ENCODE measurements at regions of chr12 and their contacts with region 1.

Region 1: DNA sequence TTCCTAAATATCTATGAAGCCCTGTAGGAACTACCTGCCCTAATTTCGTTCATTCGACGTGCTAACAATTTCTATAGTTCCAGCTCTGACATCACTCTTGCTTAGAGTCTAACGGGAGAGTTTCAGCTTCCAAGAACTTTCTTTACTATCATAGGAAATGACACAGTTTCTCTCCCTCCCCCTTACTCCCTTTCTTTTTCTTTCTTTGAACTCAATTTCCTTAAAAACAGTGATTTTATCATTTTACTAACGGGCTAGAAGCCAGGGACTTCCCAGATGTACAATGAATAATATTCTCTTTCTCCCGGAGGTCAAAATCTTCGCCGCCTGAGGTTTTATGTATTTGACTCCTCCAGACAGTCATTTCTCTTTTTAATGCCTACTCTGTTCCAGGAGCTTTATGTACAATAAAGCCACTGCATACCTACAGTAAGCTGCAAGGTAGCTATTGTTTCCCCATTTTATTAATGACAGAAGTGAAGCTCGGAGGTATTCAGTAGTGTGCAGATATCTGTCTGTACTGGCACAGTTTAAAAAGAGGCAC is 15.7 kb downstream of the SMCO2 start:
- DNase-seq: peak; percentile 59
- H3K4me3 Mint-ChIP-seq: no peak overlapping the region
- H3K27ac Mint-ChIP-seq: peak overlapping the region; percentile 72
- H3K4me1 Mint-ChIP-seq: peaks cover 58% of the 10 kb centered on the region
- H3K27me3 Mint-ChIP-seq: no peaks in the 10 kb centered on the region

Region 2: DNA sequence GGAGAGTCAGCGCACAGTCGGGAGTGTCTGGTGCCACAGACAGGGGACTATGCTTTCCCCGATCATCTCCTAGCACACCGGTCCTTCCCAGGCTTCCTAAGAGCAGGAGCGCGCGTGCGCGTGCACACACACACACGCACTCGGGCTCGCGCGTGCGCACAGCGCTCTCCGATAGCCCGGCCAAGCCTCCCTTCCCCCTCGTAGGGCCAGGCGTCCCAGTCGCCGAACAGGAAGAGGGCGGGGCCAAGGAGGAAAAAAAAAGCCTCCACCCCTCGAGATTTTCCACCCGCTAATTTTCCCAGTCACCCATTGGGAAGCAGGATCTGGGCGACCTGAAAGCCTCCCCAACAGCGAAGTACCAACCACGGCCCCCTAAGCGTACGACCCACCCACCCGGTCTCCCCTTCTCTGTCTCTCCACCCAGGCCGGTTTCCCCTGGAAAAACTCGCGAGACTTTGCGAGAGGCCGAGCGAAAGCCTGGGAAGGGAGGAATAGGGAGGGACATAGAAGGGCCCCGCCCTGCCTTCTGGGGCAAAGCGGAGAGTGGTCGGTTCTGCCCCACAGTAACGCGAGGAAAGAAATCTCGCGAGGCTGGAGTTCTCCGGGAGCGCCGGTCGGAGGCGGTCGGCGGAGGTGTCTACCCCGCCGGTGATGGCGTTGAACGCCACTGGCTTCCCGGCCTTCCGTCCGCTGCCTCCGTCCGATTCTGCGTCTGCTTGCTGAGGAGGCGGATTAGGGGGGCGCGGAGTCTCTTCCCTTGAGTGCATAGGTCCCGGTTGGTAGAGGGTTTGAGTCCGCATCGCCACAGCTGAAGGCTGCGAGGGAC is 524.1 kb before region 1 on chr12 and contains the starts of genes FGFR1OP2 and INTS13:
- CTCF ChIA-PET with region 1: no interaction called
- intact Hi-C with region 1: loop called (anchors 5 kb)
- DNase-seq: peak; percentile 99
- H3K4me3 Mint-ChIP-seq: peak within 1 kb of the TSS; percentile 93
- H3K27ac Mint-ChIP-seq: peak within 1 kb of the TSS; percentile 98
- H3K4me1 Mint-ChIP-seq: peaks cover 52% of the 10 kb centered on the region
- H3K27me3 Mint-ChIP-seq: no peaks in the 10 kb centered on the region
- total RNA-seq, gene FGFR1OP2: 37.0 to 38.4 TPM
- total RNA-seq, gene INTS13: 39.6 to 42.0 TPM

Region 3: DNA sequence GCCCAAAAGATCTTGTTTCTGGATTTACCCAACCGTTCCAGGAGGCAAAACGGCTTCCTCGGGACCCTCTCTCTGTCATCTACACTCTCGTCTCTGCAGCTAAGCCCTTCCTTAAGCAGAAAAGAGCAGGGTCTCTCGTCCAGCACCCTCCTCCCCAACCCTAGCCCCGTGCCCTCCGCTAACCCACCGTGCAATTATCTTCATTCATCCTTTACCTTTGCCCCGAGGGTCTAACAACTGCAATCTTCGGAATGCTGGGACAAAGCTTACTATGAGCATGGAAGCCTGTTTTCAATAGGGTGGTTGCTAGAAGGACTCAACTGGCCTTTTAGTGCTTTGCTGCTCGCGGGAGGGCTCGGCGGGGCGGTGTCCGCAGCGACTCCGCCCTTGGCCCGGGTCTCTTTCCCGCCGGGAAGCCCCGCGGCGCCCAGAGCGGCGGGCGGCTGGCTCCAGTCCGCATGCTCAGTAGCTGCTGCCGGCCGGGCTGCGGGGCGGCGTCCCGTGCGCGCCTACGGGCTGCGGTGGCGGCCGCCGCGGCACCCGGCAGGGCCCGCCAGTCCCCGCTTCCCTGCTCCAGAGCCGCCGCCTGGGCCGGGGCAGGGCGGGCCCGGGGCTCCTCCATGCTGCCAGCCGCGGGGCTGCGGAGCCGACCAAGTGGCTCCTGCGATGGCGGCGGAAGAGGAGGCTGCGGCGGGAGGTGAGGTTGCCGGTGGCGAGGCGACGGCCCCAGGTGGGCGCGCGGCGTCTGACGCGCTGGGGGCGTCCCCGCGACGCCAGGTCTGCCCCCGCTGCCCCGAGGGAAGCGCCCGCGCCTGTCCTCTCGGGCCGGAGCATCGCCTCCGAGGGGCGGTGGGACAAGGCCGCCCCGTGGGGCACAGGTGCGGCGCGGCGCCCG is 129.6 kb before region 1 on chr12 and contains the start of gene BMAL2:
- CTCF ChIA-PET with region 1: no interaction called
- intact Hi-C with region 1: loop called (anchors 2 kb)
- DNase-seq: peak; percentile 44
- H3K4me3 Mint-ChIP-seq: peak within 1 kb of the TSS; percentile 90
- H3K27ac Mint-ChIP-seq: peak within 1 kb of the TSS; percentile 74
- H3K4me1 Mint-ChIP-seq: peaks cover 34% of the 10 kb centered on the region
- H3K27me3 Mint-ChIP-seq: peaks cover 30% of the 10 kb centered on the region
- total RNA-seq, gene BMAL2: 7.9 to 9.2 TPM

Region 4: DNA sequence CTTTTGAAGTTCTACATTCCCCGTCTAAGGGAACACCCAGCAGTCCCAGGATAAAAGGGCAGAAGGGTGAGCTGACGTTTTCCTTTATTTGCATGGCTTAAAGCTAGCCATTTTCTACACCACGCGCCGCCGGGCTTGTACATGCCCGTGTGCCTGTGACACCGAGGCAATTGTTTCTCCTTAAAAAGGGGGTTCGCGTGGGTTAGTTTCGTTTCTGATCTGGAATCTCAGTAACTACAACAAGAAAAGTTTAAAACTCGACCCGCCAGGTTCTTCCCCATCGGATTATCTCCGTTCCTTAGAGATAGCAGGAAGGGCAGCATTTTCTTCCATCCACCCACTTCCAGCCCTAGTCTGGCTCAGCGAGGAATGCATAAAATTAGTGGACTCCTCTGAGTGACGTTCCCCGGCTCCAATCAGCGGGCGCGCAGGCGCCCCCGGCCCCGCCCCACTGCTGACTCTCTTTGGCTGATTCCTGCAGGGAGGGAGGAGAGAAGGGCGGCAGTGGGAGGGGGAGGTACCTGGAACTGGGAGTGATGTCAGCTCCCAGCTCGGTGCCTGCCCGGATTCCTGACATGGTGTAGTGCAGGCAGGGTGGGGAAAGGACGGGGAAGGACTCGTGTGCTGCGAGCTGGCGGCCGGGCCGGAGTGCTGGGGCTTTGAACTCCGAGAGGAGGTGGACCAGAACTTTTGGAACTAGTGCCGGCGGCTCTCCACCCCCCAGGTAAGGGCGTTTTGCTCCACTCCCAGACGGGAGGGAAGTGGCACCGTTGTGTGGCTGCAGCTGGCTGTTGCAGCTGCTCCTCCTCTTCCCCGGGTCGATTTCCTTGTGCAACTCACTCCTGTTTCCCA is 61.6 kb after region 1 on chr12 and contains the start of gene PPFIBP1:
- CTCF ChIA-PET with region 1: interaction called, 3 read pairs
- intact Hi-C with region 1: loop called (anchors 1 kb)
- DNase-seq: peak; percentile 99
- H3K4me3 Mint-ChIP-seq: peak within 1 kb of the TSS; percentile 94
- H3K27ac Mint-ChIP-seq: peak within 1 kb of the TSS; percentile 85
- H3K4me1 Mint-ChIP-seq: peaks cover 24% of the 10 kb centered on the region
- H3K27me3 Mint-ChIP-seq: peaks cover 1% of the 10 kb centered on the region
- total RNA-seq, gene PPFIBP1: 43.4 to 43.6 TPM

Region 5: GRCh38 chr12:27627123-27627835 is 165.1 kb after region 1 on chr12:
- CTCF ChIA-PET with region 1: no interaction called
- intact Hi-C with region 1: loop called (anchors 2 kb)
- DNase-seq: no peak
- H3K4me3 Mint-ChIP-seq: no peak overlapping the region
- H3K27ac Mint-ChIP-seq: peak overlapping the region; percentile 8
- H3K4me1 Mint-ChIP-seq: peaks cover 16% of the 10 kb centered on the region
- H3K27me3 Mint-ChIP-seq: no peaks in the 10 kb centered on the region

Region 6: DNA sequence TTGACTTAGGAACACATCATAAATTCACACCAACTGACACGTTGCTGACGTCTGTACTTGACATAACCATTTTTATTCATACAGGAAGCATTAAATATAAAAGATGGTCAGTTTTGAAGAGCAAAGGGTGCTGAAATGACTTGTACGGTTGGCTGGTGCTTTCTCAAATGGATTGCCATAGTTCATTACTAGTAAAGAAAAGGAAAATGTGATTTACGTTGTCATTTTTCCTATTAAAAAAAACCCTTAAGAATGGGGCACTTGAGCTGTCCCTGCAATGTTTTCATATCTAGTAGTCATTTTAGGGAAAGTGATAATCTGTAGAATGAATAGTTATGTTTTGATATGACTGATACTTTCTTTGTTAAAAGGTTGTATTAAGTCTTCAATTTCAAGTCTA is 340.3 kb after region 1 on chr12:
- CTCF ChIA-PET with region 1: no interaction called
- intact Hi-C with region 1: loop called (anchors 1 kb)
- DNase-seq: peak; percentile 49
- H3K4me3 Mint-ChIP-seq: no peak overlapping the region
- H3K27ac Mint-ChIP-seq: peak overlapping the region; percentile 85
- H3K4me1 Mint-ChIP-seq: peaks cover 59% of the 10 kb centered on the region
- H3K27me3 Mint-ChIP-seq: peaks cover 4% of the 10 kb centered on the region